ENCODE measurements at regions of chr3 and their contacts with region 1.

Region 1: GRCh38 chr3:187150599-187150998 is 11.3 kb upstream of the RPL39L start:
- DNase-seq: peak; percentile 71
- ATAC-seq: peak; percentile 64
- H3K4me3 Mint-ChIP-seq: no peak overlapping the region
- H3K27ac Mint-ChIP-seq: no peak overlapping the region
- H3K4me1 Mint-ChIP-seq: peaks cover 3% of the 10 kb centered on the region
- H3K27me3 Mint-ChIP-seq: peaks cover 37% of the 10 kb centered on the region

Region 2: DNA sequence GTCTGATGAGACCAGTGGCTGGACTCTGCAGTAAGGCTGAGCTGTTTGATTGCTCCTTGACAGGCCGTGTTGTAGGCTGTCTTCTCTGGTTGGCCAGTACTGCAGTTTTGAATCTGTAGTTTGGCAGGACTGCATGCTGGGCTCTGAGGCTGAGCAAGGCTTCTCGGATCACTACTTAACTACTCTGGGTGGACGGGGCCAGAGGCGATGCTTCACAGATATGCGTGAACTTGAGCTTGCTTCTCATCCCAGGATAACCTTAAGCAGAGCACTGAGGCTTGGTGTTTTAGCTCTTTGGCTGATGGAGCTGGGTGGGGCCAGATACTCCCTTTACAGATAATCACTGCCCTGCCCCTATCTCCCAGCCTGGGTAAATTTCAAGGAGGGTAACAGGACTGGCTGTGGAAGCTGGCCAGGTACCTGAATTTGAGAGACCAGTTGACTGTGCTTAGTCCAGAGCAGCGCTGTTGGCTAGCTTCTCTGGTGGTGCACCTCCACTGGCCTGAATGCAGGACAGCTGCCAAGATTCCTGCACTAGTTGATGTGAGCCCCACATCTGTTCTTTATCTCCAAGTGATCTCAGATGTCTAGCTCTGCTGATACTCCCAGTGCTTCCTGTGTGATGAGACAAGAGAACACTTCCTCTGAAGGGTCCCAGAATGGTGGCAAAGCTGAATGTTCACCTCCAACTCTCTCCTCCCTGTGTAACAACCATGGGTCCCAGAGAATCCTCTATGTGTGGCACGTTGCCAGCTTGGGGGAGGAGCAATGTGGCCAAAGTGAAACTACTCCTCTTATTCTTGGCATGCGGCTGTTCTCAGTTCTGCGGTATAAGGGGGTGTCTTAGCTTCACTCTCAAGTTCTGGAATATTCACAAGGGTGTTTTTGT is 49.2 kb before region 1 on chr3:
- CTCF ChIA-PET with region 1: interaction called, 16 read pairs
- POLR2A ChIA-PET with region 1: no interaction called
- DNase-seq: peak; percentile 70
- ATAC-seq: peak; percentile 81
- H3K4me3 Mint-ChIP-seq: peak overlapping the region; percentile 32
- H3K27ac Mint-ChIP-seq: peak overlapping the region; percentile 74
- H3K4me1 Mint-ChIP-seq: peaks cover 35% of the 10 kb centered on the region
- H3K27me3 Mint-ChIP-seq: no peaks in the 10 kb centered on the region

Region 3: GRCh38 chr3:187125319-187126031 is 25.1 kb before region 1 on chr3:
- CTCF ChIA-PET with region 1: interaction called, 19 read pairs
- POLR2A ChIA-PET with region 1: no interaction called
- DNase-seq: no peak
- ATAC-seq: no peak
- H3K4me3 Mint-ChIP-seq: no peak overlapping the region
- H3K27ac Mint-ChIP-seq: no peak overlapping the region
- H3K4me1 Mint-ChIP-seq: peaks cover 21% of the 10 kb centered on the region
- H3K27me3 Mint-ChIP-seq: no peaks in the 10 kb centered on the region

Region 4: GRCh38 chr3:187130346-187131066 is 20.1 kb before region 1 on chr3:
- CTCF ChIA-PET with region 1: interaction called, 19 read pairs
- POLR2A ChIA-PET with region 1: no interaction called
- DNase-seq: peak; percentile 64
- ATAC-seq: peak; percentile 99
- H3K4me3 Mint-ChIP-seq: peak overlapping the region; percentile 65
- H3K27ac Mint-ChIP-seq: peak overlapping the region; percentile 94
- H3K4me1 Mint-ChIP-seq: peaks cover 38% of the 10 kb centered on the region
- H3K27me3 Mint-ChIP-seq: no peaks in the 10 kb centered on the region

Region 5: GRCh38 chr3:187164885-187165543 is 14.4 kb after region 1 on chr3:
- CTCF ChIA-PET with region 1: interaction called, 56 read pairs
- POLR2A ChIA-PET with region 1: no interaction called
- DNase-seq: peak; percentile 63
- ATAC-seq: peak; percentile 47
- H3K4me3 Mint-ChIP-seq: no peak overlapping the region
- H3K27ac Mint-ChIP-seq: no peak overlapping the region
- H3K4me1 Mint-ChIP-seq: peaks cover 4% of the 10 kb centered on the region
- H3K27me3 Mint-ChIP-seq: peaks cover 36% of the 10 kb centered on the region

Measured in activated CD8-positive, alpha-beta T cell treated with anti-CD3 and anti-CD28 coated beads, Interleukin-2, amount 10 ng/mL, durations not matched to agents 7 days and 5 days (primary cell).